ENCODE measurements at regions of chr1 and their contacts with region 1.

Region 1: GRCh38 chr1:17922833-17923232 is 167.7 kb downstream of the ACTL8 start:
- DNase-seq: no peak
- ATAC-seq: no peak
- H3K4me3 ChIP-seq: no peak overlapping the region
- H3K27ac ChIP-seq: no peak overlapping the region
- H3K4me1 ChIP-seq: no peaks in the 10 kb centered on the region
- H3K27me3 ChIP-seq: peaks cover 0 to 3% of the 10 kb centered on the region in 2 donors

Region 2: GRCh38 chr1:17944606-17945005 is 21.8 kb after region 1 on chr1:
- intact Hi-C with region 1: no loop called
- DNase-seq: no peak
- ATAC-seq: no peak
- H3K4me3 ChIP-seq: no peak overlapping the region
- H3K27ac ChIP-seq: no peak overlapping the region
- H3K4me1 ChIP-seq: no peaks in the 10 kb centered on the region
- H3K27me3 ChIP-seq: no peaks in the 10 kb centered on the region

Region 3: GRCh38 chr1:18091660-18092446 is 169.0 kb after region 1 on chr1:
- intact Hi-C with region 1: loop called in 1 of 2 experiments (anchors 10 kb)
- DNase-seq: peak; percentile 74 to 84
- ATAC-seq: peak; percentile 71
- H3K4me3 ChIP-seq: no peak overlapping the region
- H3K27ac ChIP-seq: no peak overlapping the region
- H3K4me1 ChIP-seq: peaks cover 0 to 3% of the 10 kb centered on the region in 2 donors
- H3K27me3 ChIP-seq: no peaks in the 10 kb centered on the region

Measured in aorta (tissue), 5 donors.